ENCODE measurements at regions of chr6 and their contacts with region 1.

Region 1: DNA sequence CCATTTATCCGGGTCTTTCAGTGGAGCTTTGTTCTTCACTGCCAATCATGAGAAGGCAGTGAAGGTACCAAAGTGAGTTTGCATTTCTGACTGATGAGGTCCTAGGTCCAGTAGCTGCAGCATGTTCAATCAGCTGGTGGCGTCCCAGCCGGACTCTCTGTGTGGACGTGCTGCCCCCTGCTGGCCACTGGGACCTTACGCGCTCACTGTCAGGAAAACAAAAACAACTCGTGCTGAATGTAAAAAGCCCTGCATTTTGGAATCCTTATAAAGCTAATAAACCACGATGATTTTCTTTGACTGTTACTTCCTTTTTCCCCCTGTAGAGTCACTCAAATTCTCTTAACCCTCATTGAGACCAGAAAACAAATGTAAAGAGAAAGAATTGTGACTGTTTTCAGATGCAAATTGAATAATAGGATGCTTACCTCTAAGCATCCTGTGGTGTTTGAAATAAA is 4.9 kb upstream of the CD24 start:
- DNase-seq: peak; percentile 88
- ATAC-seq: peak; percentile 25
- H3K4me3 ChIP-seq: no peak overlapping the region
- H3K4me3 Mint-ChIP-seq: no peak overlapping the region
- H3K27ac ChIP-seq: no peak overlapping the region
- H3K27ac Mint-ChIP-seq: peak overlapping the region; percentile 59
- H3K4me1 ChIP-seq: peaks cover 6 to 11% of the 10 kb centered on the region in 2 donors
- H3K4me1 Mint-ChIP-seq: peaks cover 20% of the 10 kb centered on the region
- H3K27me3 ChIP-seq: peaks cover 0 to 4% (median 0%) of the 10 kb centered on the region in 4 experiments
- H3K27me3 Mint-ChIP-seq: peaks cover 6% of the 10 kb centered on the region
- CTCF ChIP-seq: peak; percentile 98

Region 2: GRCh38 chr6:106339334-106340029 is 640.0 kb before region 1 on chr6:
- CTCF ChIA-PET with region 1: interaction called, 18 read pairs
- POLR2A ChIA-PET with region 1: no interaction called
- intact Hi-C with region 1: loop called (anchors 1 kb)
- DNase-seq: peak; percentile 66
- ATAC-seq: peak; percentile 74
- H3K4me3 ChIP-seq: peak overlapping the region in 2 of 5 experiments; percentile 17 to 24
- H3K4me3 Mint-ChIP-seq: peak overlapping the region; percentile 61
- H3K27ac ChIP-seq: no peak overlapping the region
- H3K27ac Mint-ChIP-seq: no peak overlapping the region
- H3K4me1 ChIP-seq: peaks cover 5% of the 10 kb centered on the region in 2 donors
- H3K4me1 Mint-ChIP-seq: peaks cover 2% of the 10 kb centered on the region
- H3K27me3 ChIP-seq: peaks cover 0 to 2% (median 0%) of the 10 kb centered on the region in 4 experiments
- H3K27me3 Mint-ChIP-seq: peaks cover 31% of the 10 kb centered on the region
- CTCF ChIP-seq: peak; percentile 81

Region 3: DNA sequence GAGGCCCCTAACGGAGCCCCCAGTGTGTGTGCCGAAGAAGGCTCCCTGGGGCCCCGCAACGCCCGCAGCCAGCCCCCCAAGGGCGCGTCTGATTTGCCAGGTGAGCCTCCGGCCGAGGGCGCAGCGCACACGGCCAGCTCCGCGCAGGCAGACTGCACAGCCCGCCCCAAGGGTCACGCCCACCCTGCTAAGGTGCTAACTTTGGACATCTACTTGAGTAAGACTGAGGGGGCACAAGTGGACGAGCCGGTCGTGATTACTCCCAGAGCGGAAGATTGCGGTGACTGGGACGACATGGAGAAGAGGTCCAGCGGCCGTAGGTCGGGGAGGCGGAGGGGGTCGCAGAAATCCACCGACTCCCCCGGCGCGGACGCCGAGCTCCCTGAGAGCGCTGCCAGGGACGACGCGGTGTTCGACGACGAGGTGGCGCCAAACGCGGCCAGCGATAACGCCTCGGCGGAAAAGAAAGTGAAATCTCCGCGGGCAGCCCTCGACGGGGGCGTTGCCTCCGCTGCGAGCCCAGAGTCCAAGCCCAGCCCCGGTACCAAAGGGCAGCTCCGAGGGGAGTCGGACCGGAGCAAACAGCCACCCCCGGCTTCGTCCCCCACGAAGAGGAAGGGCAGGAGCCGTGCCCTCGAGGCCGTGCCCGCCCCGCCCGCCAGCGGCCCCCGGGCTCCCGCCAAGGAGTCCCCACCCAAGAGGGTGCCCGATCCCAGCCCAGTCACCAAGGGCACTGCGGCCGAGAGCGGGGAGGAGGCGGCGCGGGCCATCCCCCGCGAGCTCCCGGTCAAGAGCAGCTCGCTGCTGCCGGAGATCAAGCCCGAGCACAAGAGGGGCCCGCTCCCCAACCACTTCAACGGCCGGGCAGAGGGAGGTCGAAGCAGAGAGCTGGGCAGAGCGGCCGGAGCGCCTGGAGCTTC is 467.1 kb before region 1 on chr6:
- CTCF ChIA-PET with region 1: interaction called, 22 read pairs
- POLR2A ChIA-PET with region 1: interaction called, 5 read pairs
- intact Hi-C with region 1: loop called (anchors 2 kb)
- DNase-seq: peak; percentile 89
- ATAC-seq: peak; percentile 69
- H3K4me3 ChIP-seq: peak overlapping the region; percentile 84 to 96 (median 91)
- H3K4me3 Mint-ChIP-seq: peak overlapping the region; percentile 98
- H3K27ac ChIP-seq: peak overlapping the region; percentile 91 to 95
- H3K27ac Mint-ChIP-seq: peak overlapping the region; percentile 97
- H3K4me1 ChIP-seq: peaks cover 46 to 50% of the 10 kb centered on the region in 2 donors
- H3K4me1 Mint-ChIP-seq: peaks cover 57% of the 10 kb centered on the region
- H3K27me3 ChIP-seq: no peaks in the 10 kb centered on the region
- H3K27me3 Mint-ChIP-seq: no peaks in the 10 kb centered on the region
- CTCF ChIP-seq: peak; percentile 66

Region 4: GRCh38 chr6:106620931-106621672 is 358.4 kb before region 1 on chr6:
- CTCF ChIA-PET with region 1: interaction called, 229 read pairs
- POLR2A ChIA-PET with region 1: no interaction called
- intact Hi-C with region 1: no loop called
- DNase-seq: no peak
- ATAC-seq: no peak
- H3K4me3 ChIP-seq: no peak overlapping the region
- H3K4me3 Mint-ChIP-seq: no peak overlapping the region
- H3K27ac ChIP-seq: no peak overlapping the region
- H3K27ac Mint-ChIP-seq: no peak overlapping the region
- H3K4me1 ChIP-seq: peaks cover 3 to 7% of the 10 kb centered on the region in 2 donors
- H3K4me1 Mint-ChIP-seq: peaks cover 24% of the 10 kb centered on the region
- H3K27me3 ChIP-seq: no peaks in the 10 kb centered on the region
- H3K27me3 Mint-ChIP-seq: no peaks in the 10 kb centered on the region
- CTCF ChIP-seq: no peak

Region 5: GRCh38 chr6:106688186-106688951 is 291.1 kb before region 1 on chr6:
- CTCF ChIA-PET with region 1: interaction called, 15 read pairs
- POLR2A ChIA-PET with region 1: no interaction called
- intact Hi-C with region 1: loop called (anchors 5 kb)
- DNase-seq: peak; percentile 32
- ATAC-seq: peak; percentile 33
- H3K4me3 ChIP-seq: peak overlapping the region in 1 of 5 experiments; percentile 1
- H3K4me3 Mint-ChIP-seq: peak overlapping the region; percentile 29
- H3K27ac ChIP-seq: no peak overlapping the region
- H3K27ac Mint-ChIP-seq: peak overlapping the region; percentile 26
- H3K4me1 ChIP-seq: peaks cover 19 to 30% of the 10 kb centered on the region in 2 donors
- H3K4me1 Mint-ChIP-seq: peaks cover 32% of the 10 kb centered on the region
- H3K27me3 ChIP-seq: no peaks in the 10 kb centered on the region
- H3K27me3 Mint-ChIP-seq: no peaks in the 10 kb centered on the region
- CTCF ChIP-seq: no peak

Region 6: DNA sequence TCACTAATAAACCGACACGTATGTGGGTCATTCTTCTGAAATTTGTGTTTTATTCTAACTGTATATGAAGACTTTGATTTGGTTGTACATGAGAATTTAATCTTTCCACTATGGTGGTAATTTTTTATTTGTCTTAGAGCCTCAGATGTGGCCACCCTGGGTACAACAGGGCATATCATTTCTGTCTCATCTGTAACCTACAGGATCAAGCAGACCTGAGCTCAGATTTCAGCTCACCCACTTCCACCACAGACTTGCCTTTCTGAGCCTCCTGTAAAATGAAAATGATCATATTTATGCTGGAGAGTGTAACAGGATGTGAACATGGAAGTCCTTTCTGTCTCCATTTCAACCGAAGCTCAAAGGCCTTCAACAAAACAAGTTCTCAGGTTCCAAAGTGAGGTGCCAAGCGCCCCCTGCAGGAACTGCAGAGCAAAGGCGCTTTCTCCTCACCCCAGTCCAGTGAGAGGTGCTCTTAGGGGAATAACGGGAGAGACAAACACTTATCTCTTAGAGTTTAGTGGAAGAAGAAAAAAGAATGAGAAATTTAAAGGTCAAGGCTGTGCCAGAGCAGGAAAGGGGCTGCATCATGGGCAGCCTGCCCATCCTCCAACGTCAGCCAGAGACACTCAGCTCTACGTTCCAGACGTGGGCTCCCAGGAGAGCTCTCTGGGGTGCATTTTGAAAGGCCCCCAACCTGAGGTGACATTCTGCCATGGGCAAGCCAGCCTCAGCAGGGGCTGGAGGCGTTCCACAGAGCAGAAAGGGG is 18.1 kb after region 1 on chr6:
- CTCF ChIA-PET with region 1: interaction called, 13 read pairs
- POLR2A ChIA-PET with region 1: interaction called, 3 read pairs
- intact Hi-C with region 1: no loop called
- DNase-seq: peak; percentile 71
- ATAC-seq: peak; percentile 64
- H3K4me3 ChIP-seq: no peak overlapping the region
- H3K4me3 Mint-ChIP-seq: no peak overlapping the region
- H3K27ac ChIP-seq: no peak overlapping the region
- H3K27ac Mint-ChIP-seq: no peak overlapping the region
- H3K4me1 ChIP-seq: peaks cover 0 to 5% of the 10 kb centered on the region in 2 donors
- H3K4me1 Mint-ChIP-seq: no peaks in the 10 kb centered on the region
- H3K27me3 ChIP-seq: no peaks in the 10 kb centered on the region
- H3K27me3 Mint-ChIP-seq: peaks cover 3% of the 10 kb centered on the region
- CTCF ChIP-seq: peak; percentile 95